HEK293T (cell line): ENCODE measurements at regions of chr22 and their contacts with region 1.

Region 1: DNA sequence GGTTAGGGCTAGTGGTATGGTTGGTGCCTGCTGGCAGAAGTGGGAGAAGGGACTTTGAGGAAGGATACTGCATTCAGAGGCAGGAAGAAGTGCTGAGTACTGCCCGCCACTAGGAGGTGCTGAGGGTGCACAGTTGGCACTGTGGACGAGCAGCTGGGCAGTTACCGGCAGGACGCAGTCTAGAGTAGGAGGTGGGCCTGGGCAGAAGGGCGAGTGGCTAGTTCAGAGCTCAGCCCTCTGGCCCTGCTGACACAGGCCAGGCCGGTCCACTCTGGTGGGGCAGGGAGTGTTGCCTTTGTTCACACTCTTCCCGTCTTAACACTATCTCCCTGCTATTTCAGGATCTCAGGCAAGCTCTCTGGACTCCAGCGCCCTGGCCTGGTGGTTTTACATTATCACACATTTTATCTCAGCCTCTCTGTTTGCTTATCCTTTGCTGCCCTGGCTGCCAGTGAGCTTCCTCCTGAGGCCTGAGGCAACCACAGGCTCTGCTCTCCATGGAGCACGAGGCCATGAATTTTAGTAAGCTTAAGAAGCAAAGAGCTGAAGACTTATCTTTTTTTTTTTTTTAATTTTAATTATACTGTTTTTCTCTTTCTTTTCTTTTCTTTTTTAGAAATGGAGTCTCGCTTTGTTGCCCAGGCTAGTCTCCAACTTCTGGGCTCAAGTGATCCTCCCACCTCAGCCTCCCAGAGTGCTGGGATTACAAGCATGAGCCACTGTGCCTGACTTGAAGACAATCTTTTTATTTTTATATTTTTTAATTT is 26.9 kb downstream of the SNAP29 start:
- DNase-seq: peak; percentile 91

Region 2: GRCh38 chr22:20741634-20742581 is 143.8 kb before region 1 on chr22:
- CTCF ChIA-PET with region 1: no interaction called
- POLR2A ChIA-PET with region 1: no interaction called
- DNase-seq: peak; percentile 64

Region 3: DNA sequence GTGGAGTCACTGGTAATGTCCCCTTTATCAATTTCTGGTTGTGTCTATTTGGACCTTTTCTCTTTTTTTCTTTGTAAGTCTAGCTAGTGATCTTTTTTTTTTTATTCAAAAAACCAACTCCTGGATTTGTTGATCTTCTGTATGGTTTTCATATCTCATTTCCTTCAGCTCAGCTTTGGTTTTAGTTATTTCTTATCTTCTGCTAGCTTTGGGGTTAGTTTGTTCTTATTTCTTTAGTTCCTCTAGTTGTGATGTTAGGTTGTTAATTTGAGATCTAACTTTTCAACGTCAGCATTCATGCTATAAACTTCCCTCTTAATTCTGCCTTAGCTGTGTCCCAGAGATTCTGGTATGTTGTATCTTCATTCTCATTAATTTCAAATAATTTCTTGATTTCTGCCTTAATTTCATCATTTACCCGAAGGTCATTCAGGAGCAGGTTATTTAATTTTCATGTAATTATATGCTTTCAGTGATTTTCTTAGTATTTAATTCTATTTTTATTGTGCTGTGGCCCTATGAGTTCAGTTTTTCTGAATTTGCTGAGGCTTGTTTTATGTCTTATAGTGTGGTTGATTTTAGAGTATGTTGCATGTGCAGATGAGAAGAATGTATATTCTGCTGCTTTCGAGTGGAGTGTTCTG is 56.1 kb before region 1 on chr22:
- CTCF ChIA-PET with region 1: no interaction called
- POLR2A ChIA-PET with region 1: no interaction called
- DNase-seq: no peak

Region 4: DNA sequence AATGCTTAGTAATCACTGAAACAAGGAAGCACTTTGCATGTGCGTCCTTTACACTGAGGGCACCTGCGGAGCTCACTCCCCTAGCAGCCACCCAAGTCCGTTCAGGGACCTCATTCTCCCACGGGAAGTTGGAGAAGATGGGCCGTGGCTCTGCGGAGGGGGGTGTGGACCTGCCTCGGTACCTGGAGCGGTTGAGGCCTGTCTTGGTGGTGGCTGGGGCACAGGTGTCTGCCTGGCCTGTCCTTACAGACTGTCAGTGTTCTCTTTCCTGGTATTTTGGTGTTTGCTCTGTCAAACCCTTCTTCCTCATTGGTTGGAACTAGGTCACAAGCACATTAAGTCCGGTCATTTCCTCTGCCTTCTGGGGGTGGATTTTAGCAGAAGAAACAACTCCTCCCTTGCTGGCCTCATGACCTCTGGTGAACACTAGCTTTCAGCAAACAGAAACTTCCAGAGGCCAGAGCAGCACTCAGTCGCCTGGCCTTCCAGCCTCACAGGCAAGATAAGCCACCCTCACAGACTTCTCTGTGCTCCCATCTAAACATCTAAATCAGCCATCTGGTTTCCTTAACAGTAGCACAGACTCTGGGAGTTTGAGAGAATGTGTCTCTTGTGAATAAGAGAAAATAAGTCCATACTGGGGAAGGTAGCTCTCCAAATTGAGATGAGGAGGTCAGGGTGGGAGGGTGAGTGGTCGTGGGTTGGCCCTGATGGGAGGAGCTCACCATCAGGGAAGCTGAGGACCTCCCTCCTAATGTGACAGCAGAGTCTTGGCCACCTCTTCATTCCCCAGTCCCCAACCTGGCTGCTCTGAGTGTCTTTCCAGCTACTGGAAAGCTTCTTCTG is 18.3 kb before region 1 on chr22:
- CTCF ChIA-PET with region 1: interaction called, 10 read pairs
- POLR2A ChIA-PET with region 1: interaction called, 3 read pairs
- DNase-seq: no peak

Region 5: GRCh38 chr22:21082248-21082647 is 196.5 kb after region 1 on chr22:
- CTCF ChIA-PET with region 1: no interaction called
- POLR2A ChIA-PET with region 1: no interaction called
- DNase-seq: no peak